Posterior cingulate gyrus (tissue), 11 donors: ENCODE measurements at regions of chr3 and their contacts with region 1.

Region 1: DNA sequence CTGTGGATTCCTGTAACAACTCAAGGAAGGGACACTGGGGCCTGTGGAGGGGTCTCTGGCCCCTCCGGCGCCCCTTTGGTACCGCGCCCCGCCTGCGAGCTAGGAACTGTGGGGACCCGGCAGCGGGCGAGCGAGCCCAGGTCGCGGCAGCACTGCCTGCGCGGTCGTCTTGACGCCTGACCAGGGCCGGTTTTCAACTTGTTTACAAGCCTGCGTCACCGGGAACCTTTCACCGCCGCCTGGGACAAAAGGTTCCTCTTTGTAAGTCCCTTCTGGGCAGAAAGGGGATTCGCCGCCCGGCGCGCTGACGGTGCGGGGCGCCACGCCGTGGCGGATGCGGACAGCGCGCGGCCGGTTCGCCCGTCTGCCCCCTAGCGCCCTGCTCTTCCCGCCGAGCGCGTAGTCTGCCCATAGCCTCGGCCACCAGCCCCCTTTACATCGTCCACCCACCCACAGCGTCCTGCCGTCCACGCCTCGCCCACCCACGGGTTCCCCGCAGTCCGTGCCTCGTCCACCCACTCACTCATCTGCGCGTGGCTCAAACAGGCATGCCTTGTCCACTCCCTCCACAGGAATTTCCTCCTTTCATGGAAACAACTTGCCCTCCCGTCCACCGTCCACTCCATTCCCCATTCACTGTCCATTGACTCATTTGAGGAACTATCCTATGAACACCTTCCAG is 5.5 kb upstream of the CFAP100 start:
- DNase-seq: peak; percentile 74 to 98 (median 88)

Region 2: DNA sequence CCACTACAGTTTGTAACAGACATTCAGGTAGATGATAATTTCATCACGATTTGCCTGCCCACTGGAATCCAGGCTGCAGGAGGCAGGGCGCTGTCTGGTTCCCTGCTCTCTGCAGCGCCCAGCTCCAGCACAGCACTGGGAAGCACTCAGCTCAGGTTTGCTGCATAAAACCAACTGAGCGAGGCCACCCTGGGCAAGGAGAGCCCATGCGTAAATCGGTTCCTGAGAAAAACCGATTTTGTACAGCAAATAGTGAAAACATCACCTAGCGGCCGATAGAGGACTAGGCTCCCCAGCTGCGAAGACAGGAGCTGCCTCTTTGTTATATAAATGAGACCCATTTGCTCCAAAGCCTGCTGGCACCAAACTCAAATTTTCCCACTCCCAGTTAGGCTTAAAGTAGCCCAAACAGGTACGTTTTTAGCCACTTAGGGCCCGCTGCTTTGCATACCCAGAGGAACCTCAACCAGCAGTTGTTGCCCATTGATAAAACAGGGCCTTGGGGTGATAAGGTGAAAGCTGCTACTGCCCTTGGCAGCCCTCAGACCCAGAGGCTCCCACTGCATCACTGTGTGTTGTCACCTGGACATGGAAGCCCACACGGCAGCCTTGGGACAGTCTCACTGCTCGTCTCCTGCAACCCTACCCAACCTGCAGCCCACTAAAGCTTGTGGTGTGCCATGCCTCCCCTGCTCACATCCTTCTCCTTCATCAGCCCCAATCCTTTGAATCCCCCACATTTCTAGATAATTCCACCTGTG is 256.3 kb before region 1 on chr3:
- intact Hi-C with region 1: loop called (anchors 2 kb)
- DNase-seq: peak in 7 of 10 donors; percentile 3 to 62 (median 12)

Region 3: DNA sequence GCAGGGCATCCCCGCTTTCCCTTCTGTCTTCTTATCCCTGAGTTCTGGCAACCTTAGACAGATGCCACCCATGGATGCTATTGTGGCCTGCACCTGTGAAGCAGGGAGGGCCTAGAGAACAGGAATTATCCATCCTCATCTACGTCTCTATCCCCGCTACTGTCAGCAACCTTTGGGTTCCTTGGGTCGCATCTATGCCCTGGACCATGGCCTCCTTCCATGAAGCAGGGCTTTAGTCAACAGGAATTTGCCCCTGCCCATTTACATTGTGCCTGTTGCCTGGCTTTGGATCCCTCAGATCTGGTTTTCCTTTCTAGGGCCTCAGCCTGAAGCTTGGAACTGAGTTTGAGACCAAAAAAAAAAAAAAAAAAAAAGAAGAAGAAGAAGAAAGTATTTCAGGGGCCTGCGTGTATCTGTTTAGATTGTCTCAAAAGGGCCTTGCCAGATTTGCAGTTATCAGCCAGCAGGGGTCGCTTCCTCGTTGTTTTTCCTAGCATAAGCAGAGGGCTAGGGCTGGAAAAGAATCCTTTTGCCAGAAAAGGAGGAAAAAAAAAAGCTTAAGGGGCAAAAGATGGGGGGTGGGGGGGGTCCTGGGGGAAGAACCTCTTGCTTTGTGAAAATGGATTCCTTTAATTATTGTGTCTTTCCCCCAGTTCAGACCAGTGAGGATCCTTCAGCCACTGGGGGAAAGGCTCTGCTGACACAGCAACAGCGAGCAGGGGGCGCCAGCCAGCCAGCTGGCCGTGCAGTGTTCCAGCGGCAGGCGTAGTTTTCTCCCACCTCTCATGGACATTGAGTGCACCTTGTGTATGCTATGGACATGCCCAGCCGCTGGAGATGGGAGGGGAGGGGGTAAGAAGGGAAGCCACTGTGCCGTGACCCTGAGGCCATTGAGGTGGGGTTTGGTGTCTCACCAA is 143.2 kb before region 1 on chr3:
- intact Hi-C with region 1: loop called (anchors 1 kb)
- DNase-seq: peak in 9 of 10 donors; percentile 44 to 92 (median 76)

Region 4: DNA sequence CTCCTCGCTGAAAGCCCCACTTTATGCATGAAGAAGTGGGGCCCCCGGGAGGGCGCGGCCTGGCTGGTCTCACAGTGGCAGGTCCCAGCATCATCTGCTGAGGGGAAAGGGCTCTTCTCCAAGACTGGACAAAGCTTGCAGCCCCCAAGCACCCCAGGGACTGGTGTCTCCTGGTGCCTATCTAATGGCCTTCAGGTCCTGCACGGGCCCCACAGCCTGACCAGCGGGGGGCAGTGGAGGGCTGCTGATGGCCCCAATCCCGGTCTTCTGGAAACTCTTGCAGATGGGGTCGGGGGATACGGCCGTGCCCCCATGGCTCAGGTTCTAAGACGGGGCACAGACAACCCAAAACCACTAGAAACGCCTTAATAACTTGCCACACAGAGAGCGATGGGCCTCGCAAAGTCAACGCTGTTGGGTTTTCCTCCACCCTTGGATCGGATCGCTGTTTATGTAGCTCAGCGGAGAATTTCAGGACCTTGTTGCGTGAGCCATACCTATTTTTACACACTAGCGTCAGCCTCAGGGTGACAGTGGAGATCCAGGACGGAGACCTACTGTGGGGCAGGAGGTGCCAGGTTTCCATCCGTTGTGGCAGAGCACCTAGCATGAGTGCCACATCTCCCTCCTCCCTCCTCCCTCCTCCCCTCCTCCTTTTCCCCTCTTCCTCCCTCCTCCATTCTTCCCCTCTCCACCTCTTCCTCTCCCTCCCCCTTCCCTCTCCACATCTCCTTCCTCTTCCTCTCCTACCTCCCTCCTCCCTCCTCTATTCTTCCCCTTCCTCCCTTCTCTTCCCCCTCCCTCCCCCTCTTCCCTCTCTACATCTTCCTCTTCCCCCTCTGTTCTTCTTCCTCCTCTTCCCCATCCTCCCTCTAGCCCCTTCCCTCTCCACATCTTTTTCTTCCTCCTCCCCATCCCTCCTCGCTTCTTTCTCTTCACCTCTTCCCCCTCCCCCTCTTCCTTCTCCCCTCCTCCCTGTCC is 129.6 kb before region 1 on chr3:
- intact Hi-C with region 1: loop called (anchors 1 kb)
- DNase-seq: peak; percentile 31 to 96 (median 76)

Region 5: GRCh38 chr3:126342991-126343648 is 46.1 kb before region 1 on chr3:
- intact Hi-C with region 1: no loop called
- DNase-seq: peak in 4 of 10 donors; percentile 1 to 75 (median 22)